Sciatic nerve (tissue), 2 donors: ENCODE measurements at regions of chr10 and their contacts with region 1.

Region 1: GRCh38 chr10:21754410-21755011 is 220.5 kb downstream of the MLLT10 start:
- DNase-seq: no peak
- ATAC-seq: no peak

Region 2: GRCh38 chr10:21278491-21279239 is 475.8 kb before region 1 on chr10:
- intact Hi-C with region 1: loop called (anchors 10 kb)
- DNase-seq: peak; percentile 97
- ATAC-seq: peak; percentile 95

Region 3: DNA sequence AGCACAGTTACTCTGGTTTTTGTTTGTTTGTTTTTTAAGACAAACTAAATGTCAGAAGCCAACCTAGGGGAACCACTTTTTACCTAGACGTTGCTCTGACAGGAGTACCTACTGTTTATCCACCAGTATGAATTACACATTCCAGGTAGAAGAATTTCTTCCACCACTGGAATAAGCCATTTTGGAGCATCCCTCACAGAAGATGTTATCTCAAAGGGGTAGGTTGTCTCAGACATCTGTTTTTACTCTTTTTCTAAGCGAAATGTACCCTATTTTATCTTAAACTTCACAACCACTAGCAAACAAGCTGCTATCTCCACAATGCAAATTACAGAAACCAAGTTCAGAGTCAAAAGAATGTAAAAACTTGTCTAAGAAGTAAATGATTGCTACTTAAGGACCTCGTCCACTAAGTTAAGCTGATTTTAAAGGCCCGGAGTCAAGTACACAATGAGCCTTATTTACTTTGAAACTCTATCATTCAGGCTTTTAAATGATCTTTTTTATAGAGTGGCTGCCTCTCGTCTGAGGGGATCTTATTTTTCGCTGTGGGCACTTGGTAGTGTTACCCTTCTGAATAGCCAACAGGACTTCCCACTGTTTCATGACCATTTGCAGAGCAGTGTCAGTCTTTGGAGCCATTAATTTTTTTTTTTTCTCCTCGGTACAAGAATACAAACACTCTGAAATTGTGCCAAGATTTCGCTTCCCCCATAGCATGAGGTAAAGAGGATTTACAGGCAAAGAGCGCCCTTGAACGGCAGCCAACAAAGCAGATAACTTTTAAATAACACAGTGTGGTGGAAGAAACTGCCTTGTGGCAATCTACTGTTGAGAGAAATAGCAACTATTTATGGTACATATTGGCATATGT is 1157.6 kb after region 1 on chr10:
- intact Hi-C with region 1: no loop called
- DNase-seq: no peak
- ATAC-seq: no peak